AG04450 (cell line): ENCODE measurements at regions of chr1 and their contacts with region 1.

Region 1: GRCh38 chr1:50735443-50735842 is 224.6 kb downstream of the FAF1 start:
- DNase-seq: no peak
- H3K4me3 ChIP-seq: no peak overlapping the region
- H3K27ac ChIP-seq: no peak overlapping the region
- H3K27me3 ChIP-seq: no peaks in the 10 kb centered on the region
- CTCF ChIP-seq: peak; percentile 62

Region 2: DNA sequence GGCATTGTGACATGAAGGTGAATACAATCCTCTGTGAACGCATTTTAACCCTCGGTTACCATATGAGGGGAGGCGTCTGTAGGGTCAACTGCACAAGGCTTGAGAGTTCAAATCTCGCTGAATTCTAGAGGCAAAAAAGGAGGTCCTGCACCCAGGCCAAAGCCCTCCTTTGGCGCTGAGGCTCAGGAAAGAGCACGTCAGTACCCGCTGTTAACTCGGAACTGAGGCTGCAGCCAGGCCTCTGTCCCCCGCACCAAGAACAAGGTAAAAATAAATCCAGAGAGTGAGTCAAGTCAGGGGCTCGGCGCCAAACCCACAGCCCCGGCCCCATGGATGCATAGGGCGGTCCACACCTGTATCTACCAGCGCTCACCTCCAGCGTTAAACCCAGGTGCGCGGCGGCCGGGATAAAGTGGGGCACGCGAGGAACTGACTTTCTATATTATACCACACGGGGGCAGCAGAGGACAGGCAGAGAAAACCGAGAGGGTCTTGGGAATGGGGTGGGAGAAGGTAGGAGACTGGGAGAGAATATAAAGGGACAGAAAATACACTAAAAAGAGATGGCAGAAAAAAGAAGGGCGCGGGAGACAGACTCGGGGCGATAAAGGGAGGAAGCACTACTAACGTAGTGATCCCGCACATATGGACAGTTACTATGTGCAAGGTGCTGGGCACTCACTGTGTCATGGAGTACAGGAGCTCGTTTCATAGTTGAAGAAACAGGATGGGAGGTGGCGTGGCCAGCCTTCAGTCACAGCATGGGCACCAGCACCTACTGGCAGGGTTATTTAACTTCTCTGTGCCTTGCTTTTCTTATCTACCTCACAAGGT is 367.0 kb before region 1 on chr1:
- CTCF ChIA-PET with region 1: interaction called, 25 read pairs
- POLR2A ChIA-PET with region 1: no interaction called
- DNase-seq: no peak
- H3K4me3 ChIP-seq: no peak overlapping the region
- H3K27ac ChIP-seq: no peak overlapping the region
- H3K27me3 ChIP-seq: peaks cover 10% of the 10 kb centered on the region
- CTCF ChIP-seq: peak; percentile 74

Region 3: DNA sequence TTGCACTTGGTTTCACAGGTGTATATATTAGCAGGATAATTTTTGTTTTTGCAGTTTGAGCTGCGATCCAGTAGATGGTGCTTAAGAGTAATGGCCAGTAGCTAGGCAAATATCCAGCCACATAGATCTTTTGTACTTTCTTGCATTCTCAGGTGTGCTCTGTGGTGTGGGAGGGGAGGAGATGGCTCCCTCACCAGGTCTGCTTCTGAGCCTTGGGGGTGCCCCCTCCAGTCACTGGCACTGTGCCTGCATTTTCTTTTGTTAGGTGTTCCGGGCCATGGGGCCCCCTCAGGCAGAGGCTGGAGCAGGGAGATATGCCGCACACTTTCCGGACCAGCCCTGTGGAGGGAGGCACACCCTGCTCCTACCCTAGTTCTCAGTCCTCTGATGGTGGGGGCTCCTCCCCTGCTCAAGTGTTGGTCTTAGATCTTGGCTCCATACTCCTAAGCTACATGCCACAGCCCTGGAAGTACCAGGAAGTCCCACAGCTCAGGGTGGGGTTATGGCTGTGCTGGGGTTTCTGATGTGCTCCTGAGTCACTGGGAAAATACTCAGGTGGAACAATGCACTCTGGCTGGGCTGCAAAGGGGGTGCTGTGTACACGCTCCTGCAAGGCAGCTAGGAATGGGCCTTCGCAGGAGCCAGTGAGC is 114.6 kb before region 1 on chr1:
- CTCF ChIA-PET with region 1: interaction called, 10 read pairs
- POLR2A ChIA-PET with region 1: no interaction called
- DNase-seq: no peak
- H3K4me3 ChIP-seq: no peak overlapping the region
- H3K27ac ChIP-seq: no peak overlapping the region
- H3K27me3 ChIP-seq: no peaks in the 10 kb centered on the region
- CTCF ChIP-seq: peak; percentile 69

Region 4: DNA sequence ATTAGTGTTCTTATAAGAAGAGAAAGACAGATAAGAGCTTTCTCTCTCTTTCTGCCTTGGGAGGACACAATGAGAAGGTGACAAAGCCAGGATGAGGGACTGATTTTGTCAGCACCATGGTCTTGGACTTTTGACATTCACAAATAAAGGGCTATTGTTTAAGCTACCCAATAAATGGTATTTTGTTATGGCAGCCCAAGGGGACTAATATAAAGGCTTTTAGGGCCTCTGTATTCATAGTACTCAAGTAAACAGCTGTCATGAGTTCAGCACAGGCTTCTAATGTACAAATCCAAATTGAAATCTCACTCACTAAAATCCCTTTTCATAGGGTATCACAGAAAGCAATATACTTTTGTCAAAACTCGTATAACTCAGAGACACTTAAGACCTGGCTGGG is 18.1 kb before region 1 on chr1:
- CTCF ChIA-PET with region 1: interaction called, 10 read pairs
- POLR2A ChIA-PET with region 1: no interaction called
- DNase-seq: no peak
- H3K4me3 ChIP-seq: no peak overlapping the region
- H3K27ac ChIP-seq: no peak overlapping the region
- H3K27me3 ChIP-seq: no peaks in the 10 kb centered on the region
- CTCF ChIP-seq: no peak

Region 5: DNA sequence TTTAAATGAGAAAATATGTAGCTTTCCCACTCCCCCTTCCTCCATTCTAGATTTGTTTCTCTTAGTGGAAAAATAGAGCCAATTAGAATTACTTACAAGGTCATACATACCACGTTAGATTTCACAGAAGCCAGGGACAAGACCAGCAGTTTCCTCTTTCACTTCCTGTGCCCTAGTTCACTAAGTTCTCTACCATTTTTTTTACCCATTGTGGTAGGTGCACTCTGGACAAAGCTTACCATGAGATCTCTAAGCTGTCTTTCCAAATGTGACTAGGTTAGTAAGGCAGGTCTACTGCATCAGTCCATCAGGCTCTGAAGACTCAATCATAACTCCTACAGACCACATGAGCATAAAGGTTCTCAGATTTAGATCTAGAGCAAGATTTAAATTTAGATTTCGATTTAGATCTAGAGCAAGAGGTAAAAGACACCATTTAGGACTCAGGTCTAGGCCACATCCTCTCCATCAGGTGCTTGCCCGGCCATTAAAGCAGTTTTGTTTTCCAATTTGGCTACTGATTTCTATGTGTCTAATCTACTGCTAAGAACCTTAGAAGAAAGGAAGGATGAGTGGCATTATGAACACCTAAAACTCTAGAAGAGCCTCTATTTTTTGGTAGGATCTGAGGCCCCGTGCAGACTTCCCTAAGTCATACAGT is 10.7 kb before region 1 on chr1:
- CTCF ChIA-PET with region 1: interaction called, 13 read pairs
- POLR2A ChIA-PET with region 1: no interaction called
- DNase-seq: no peak
- H3K4me3 ChIP-seq: no peak overlapping the region
- H3K27ac ChIP-seq: no peak overlapping the region
- H3K27me3 ChIP-seq: no peaks in the 10 kb centered on the region
- CTCF ChIP-seq: no peak

Region 6: GRCh38 chr1:50766688-50767087 is 31.2 kb after region 1 on chr1:
- CTCF ChIA-PET with region 1: no interaction called
- POLR2A ChIA-PET with region 1: no interaction called
- DNase-seq: no peak
- H3K4me3 ChIP-seq: no peak overlapping the region
- H3K27ac ChIP-seq: no peak overlapping the region
- H3K27me3 ChIP-seq: no peaks in the 10 kb centered on the region
- CTCF ChIP-seq: no peak